ENCODE measurements at regions of chr12 and their contacts with region 1.

Region 1: GRCh38 chr12:95262808-95263207 is 45.2 kb downstream of the VEZT start:
- DNase-seq: peak; percentile 98
- H3K4me3 ChIP-seq: peak overlapping the region in 1 of 3 experiments; percentile 20
- H3K27ac ChIP-seq: peak overlapping the region; percentile 93
- H3K4me1 ChIP-seq: peaks cover 39% of the 10 kb centered on the region
- H3K27me3 ChIP-seq: no peaks in the 10 kb centered on the region
- CTCF ChIP-seq: no peak
- POLR2A ChIP-seq: no peak

Region 2: GRCh38 chr12:95169368-95169767 is 93.4 kb before region 1 on chr12:
- CTCF ChIA-PET with region 1: no interaction called
- POLR2A ChIA-PET with region 1: no interaction called
- dilution Hi-C with region 1: no loop called
- intact Hi-C with region 1: loop called (anchors 1 kb)
- DNase-seq: peak; percentile 96
- H3K4me3 ChIP-seq: peak overlapping the region in 1 of 3 experiments; percentile 11
- H3K27ac ChIP-seq: peak overlapping the region; percentile 90
- H3K4me1 ChIP-seq: peaks cover 45% of the 10 kb centered on the region
- H3K27me3 ChIP-seq: no peaks in the 10 kb centered on the region
- CTCF ChIP-seq: no peak
- POLR2A ChIP-seq: peak; percentile 48

Region 3: GRCh38 chr12:95277139-95277538 is 14.3 kb after region 1 on chr12:
- CTCF ChIA-PET with region 1: interaction called, 5 read pairs
- POLR2A ChIA-PET with region 1: interaction called, 4 read pairs
- dilution Hi-C with region 1: no loop called
- intact Hi-C with region 1: loop called (anchors 2 kb)
- DNase-seq: peak; percentile 96
- H3K4me3 ChIP-seq: no peak overlapping the region
- H3K27ac ChIP-seq: peak overlapping the region; percentile 56
- H3K4me1 ChIP-seq: peaks cover 17% of the 10 kb centered on the region
- H3K27me3 ChIP-seq: no peaks in the 10 kb centered on the region
- CTCF ChIP-seq: no peak
- POLR2A ChIP-seq: no peak

Region 4: DNA sequence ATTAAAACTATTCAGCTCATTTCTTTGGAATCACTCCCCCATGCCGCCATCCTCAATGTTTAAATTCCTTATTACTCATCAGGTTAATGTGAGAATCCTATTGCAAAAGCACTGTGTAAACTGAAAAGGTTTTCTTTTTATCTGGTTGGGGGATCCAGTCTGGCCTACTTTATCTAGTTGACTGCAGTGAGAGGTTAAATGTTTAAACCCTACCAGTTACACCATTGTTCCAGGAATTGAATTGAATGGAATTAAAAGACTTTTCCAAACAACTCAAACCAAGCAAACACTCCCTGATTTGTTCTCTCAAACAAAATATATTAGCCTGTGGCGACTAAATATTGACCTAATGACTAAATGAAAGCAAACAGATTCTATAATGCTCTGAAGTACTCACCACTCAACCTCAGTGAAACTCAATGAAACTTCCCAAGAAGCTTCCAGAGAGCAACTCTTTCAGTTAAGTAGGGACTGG is 55.3 kb after region 1 on chr12:
- CTCF ChIA-PET with region 1: no interaction called
- POLR2A ChIA-PET with region 1: no interaction called
- dilution Hi-C with region 1: no loop called
- intact Hi-C with region 1: loop called (anchors 2 kb)
- DNase-seq: no peak
- H3K4me3 ChIP-seq: no peak overlapping the region
- H3K27ac ChIP-seq: no peak overlapping the region
- H3K4me1 ChIP-seq: peaks cover 15% of the 10 kb centered on the region
- H3K27me3 ChIP-seq: no peaks in the 10 kb centered on the region
- CTCF ChIP-seq: no peak
- POLR2A ChIP-seq: no peak

Region 5: DNA sequence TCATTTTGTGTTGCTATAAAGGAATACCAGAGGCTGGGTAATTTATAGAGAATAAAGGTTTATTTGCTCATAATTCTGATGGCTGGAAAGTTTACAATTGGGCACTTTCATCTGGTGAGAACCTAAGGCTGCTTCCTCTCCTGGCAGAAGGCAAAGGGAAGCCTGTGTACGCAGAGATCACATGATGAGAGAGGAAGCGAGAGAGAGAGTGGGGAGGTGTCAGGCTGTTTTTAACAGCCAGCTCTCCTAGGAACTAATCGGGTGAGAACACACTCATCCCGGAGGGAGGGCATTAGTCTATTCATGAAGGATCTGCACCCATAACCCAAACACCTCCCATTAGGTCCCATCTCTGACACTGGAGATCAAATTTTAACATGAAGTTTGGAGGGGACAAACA is 165.7 kb after region 1 on chr12:
- CTCF ChIA-PET with region 1: no interaction called
- POLR2A ChIA-PET with region 1: no interaction called
- dilution Hi-C with region 1: no loop called
- intact Hi-C with region 1: no loop called
- DNase-seq: peak; percentile 39
- H3K4me3 ChIP-seq: no peak overlapping the region
- H3K27ac ChIP-seq: no peak overlapping the region
- H3K4me1 ChIP-seq: peaks cover 3% of the 10 kb centered on the region
- H3K27me3 ChIP-seq: no peaks in the 10 kb centered on the region
- CTCF ChIP-seq: no peak
- POLR2A ChIP-seq: no peak

Measured in endothelial cell of umbilical vein (primary cell).